Posterior vena cava (tissue), 2 donors: ENCODE measurements at regions of chr17 and their contacts with region 1.

Region 1: DNA sequence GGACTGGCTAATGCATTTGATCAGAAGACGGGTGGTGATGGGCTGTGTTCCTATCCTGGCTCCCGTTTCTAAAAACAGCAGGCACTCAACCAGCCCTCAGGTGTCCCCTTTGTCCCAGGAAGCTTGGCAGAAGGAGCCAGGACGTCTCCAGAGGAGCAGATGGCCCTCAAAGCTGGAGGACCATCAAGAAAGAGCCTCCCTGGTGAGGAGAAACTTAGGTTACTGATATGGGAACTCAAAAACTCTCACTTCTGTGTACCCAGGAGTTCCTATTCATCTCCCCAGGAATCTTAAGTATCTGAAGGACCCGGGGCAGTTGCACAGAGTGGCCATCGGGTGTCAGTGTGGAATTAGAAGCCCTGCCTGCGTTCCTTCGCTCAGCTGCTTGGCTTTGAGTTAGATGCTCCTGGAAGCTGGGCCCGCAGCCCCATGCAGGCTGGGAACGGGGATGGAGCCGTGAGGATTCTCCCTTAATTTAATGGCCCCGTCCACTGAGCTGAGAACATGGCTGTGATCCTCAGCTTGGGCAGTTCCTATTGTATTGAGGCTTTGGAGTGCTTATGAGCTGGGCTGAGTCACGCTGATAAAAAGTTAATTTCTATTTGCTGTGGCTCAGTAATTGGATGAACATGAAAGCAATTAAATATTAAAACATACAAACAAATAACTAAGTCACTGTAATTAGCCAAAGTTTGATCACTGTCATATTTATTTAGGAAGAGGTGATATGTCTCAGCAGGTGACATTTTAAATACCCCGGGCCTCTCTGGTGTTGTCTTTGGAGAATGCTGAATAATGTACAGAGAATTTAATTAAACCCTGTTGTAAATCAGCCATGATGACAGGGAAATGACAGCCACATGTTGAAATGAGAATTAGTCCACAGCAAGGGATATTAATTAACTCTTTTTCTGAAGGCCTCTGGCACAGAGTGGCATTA is 402.1 kb downstream of the SEC14L1 start:
- DNase-seq: peak; percentile 92

Region 2: DNA sequence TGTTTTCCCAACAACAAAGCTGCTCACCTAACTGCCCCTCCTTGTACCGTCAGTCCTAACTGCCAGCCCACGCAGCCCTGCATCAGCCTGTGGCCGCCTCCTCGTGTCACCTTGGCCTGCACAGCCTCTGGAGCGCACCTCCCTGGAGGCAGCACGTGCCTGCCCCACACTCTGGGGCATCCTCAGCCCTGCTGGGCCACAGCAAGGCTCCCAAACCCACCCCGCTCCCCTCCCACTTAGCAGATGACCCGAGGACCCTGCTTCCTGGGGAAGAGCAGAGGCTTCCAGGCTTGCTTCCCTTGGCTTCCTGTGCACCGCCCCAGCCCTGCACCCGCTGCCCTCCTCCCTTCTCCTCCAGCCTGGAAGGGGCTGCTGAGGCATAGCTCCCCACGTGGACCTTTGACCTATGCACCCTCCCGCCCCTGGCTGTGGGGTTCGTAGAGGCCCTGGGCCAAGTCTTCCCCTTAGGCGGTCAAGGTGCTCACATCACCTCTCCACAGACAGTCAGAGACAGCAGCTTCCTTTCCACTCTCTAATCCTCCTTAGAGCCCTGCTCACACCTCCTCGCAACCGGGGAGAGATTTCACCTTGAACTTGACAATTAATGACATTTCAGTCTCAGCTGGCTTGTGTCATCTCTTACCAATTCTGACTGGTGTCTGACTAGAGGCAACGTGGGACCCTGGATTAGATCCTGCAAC is 559.6 kb before region 1 on chr17:
- intact Hi-C with region 1: no loop called
- DNase-seq: no peak

Region 3: GRCh38 chr17:77755410-77755963 is 212.7 kb after region 1 on chr17:
- intact Hi-C with region 1: loop called in 1 of 2 experiments (anchors 10 kb)
- DNase-seq: no peak

Region 4: GRCh38 chr17:78019367-78019975 is 476.6 kb after region 1 on chr17:
- intact Hi-C with region 1: loop called in 1 of 2 experiments (anchors 5 kb)
- DNase-seq: no peak